Transverse colon (tissue), 4 donors: ENCODE measurements at regions of chr2 and their contacts with region 1.

Region 1: DNA sequence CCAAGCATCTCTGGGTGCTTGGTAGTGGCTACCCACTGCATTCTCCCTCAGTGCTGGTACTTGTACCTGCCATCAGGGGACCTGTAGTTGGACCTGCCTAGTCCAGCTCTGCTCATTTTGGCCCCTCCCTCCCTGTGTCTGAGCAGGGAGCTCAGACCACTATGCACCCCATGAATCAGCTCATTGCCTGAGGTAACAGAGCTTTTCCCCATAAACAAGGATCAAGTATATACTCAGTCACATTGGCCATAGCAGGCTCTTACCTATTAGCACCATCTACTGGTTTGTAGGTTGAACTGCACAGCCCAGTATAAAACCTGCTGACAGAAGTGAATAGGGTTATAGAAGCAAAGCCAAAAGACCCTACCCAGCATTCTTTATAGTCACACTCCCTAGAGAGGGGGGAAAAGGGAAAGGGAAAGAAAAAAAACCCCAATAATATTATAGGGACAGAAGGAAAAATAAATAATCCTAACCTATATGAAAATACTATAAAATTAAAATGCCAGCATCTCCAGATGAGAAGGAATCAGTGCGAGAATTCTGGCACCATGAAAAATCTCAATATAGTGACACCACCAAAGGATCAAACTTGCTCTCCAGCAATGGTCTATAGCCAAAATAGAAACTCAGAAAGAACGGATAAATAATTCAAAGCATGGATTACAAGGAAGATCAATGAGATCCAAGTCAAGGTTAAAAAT is 6.9 kb upstream of the FLACC1 start:
- DNase-seq: no peak
- H3K4me3 ChIP-seq: no peak overlapping the region
- H3K27ac ChIP-seq: no peak overlapping the region
- H3K4me1 ChIP-seq: no peaks in the 10 kb centered on the region
- H3K27me3 ChIP-seq: no peaks in the 10 kb centered on the region
- CTCF ChIP-seq: peak; percentile 77 to 88 (median 84)
- EP300 ChIP-seq: no peak
- POLR2A ChIP-seq: no peak

Region 2: GRCh38 chr2:200929334-200930249 is 434.4 kb before region 1 on chr2:
- in situ Hi-C with region 1: no loop called
- intact Hi-C with region 1: no loop called
- DNase-seq: no peak
- H3K4me3 ChIP-seq: no peak overlapping the region
- H3K27ac ChIP-seq: no peak overlapping the region
- H3K4me1 ChIP-seq: no peaks in the 10 kb centered on the region
- H3K27me3 ChIP-seq: no peaks in the 10 kb centered on the region
- CTCF ChIP-seq: no peak
- EP300 ChIP-seq: no peak
- POLR2A ChIP-seq: no peak

Region 3: DNA sequence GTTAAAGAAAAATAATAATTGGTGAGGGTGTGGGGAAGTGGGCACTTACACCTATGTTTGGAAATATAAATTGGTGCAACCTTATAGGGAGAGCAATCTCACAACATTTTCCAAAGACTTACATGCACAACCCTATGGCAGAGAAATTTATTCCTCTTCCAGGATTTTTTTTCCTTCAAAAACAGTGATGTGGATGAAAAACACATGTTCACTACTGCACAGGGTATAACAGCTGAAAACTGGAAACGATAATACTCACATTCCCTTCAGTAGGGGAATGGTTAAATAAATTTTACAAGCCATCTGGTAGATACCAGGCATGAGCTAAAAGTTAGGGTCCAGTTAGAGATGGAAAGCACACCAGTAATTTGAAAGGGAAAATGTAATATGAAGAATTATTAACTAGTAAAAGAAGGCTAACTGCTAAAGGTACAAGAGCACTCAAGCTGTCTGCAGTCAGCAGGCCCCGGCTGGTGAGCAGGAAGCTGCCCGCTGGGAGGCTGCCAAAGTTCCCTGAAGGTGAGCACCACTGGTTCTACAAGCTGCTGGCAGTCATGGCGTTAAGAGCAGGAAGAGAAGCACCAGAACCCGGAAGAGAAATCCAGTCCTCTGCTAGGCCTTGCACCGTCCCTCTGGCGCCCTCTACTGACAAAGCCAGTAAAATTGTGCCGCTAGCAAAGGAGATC is 132.1 kb before region 1 on chr2:
- in situ Hi-C with region 1: loop called in 3 of 4 experiments (anchors 10 to 25 kb)
- intact Hi-C with region 1: no loop called
- DNase-seq: peak; percentile 94
- H3K4me3 ChIP-seq: no peak overlapping the region
- H3K27ac ChIP-seq: peak overlapping the region; percentile 84 to 90 (median 86)
- H3K4me1 ChIP-seq: peaks cover 6 to 63% (median 38%) of the 10 kb centered on the region in 4 donors
- H3K27me3 ChIP-seq: no peaks in the 10 kb centered on the region
- CTCF ChIP-seq: peak; percentile 80 to 95 (median 91)
- EP300 ChIP-seq: no peak
- POLR2A ChIP-seq: no peak

Region 4: DNA sequence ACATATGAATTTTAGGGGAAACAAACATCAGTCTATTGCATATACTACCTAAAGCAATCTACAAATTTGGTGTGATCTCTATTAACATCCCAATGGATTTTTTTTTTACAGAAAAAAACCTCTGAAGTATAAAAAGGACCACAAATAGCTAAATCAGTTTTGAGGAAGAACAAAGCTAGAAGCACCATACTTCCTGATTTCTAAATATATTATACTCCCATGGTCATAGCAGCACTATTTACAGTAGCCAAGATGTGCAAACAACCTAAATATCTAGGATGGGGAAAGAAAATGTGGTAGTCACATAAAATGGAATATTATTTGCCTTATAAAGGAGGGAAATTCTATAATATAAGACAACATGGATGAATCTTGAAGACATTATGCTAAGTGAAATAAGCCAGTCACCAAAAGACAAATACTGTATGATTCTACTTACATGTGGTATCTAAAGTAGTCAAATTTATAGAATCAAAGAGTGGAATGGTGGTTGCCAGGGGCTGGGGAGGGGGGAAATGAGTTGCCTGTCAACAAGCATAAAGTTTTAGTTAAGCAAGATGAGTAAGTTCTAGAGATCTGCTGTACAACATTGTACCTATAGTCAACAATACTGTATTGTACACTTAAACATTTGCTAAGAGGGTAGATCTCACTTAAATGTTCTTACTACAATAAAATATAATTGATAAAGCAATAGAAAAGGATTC is 121.3 kb before region 1 on chr2:
- in situ Hi-C with region 1: loop called (anchors 10 to 25 kb)
- intact Hi-C with region 1: no loop called
- DNase-seq: no peak
- H3K4me3 ChIP-seq: no peak overlapping the region
- H3K27ac ChIP-seq: no peak overlapping the region
- H3K4me1 ChIP-seq: peaks cover 0 to 6% (median 0%) of the 10 kb centered on the region in 4 donors
- H3K27me3 ChIP-seq: no peaks in the 10 kb centered on the region
- CTCF ChIP-seq: no peak
- EP300 ChIP-seq: no peak
- POLR2A ChIP-seq: no peak

Region 5: DNA sequence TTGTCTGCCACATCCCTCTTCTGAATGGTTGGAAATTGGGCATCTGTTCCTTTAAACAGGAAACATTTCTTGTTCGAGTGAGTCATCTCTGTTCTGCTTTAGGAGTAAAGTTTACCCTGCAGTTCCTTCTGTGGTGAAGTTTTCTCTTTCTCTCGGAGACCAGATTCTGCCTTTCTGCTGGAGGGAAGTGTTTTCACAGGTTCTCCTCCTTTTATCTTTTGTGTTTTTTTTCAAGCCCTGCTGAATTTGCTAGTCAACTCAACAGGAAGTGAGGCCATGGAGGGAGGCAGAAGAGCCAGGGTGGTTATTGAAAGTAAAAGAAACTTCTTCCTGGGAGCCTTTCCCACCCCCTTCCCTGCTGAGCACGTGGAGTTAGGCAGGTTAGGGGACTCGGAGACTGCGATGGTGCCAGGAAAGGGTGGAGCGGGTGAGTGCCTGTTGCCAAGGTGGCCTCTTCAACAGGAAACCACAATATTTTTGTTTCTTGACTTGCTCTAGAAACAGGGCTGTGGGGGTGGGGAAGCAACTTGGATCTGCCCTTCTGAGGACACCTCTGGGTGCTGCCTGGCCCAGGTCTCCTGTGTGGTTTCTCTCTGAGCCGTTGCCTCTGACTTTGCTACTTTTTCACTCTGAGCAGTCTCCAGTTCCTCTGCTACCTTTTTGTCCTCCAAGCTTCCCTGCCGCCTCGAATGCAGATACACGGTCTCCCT is 105.9 kb before region 1 on chr2:
- in situ Hi-C with region 1: no loop called
- intact Hi-C with region 1: loop called (anchors 10 kb)
- DNase-seq: peak; percentile 92
- H3K4me3 ChIP-seq: peak overlapping the region; percentile 10 to 76 (median 54)
- H3K27ac ChIP-seq: peak overlapping the region; percentile 92 to 97 (median 94)
- H3K4me1 ChIP-seq: peaks cover 7 to 63% (median 28%) of the 10 kb centered on the region in 4 donors
- H3K27me3 ChIP-seq: no peaks in the 10 kb centered on the region
- CTCF ChIP-seq: peak in 1 of 5 experiments; percentile 8
- EP300 ChIP-seq: no peak
- POLR2A ChIP-seq: peak; percentile 62